ENCODE measurements at regions of chr5 and their contacts with region 1.

Region 1: GRCh38 chr5:154459015-154459414 is 13.2 kb downstream of the SAP30L start:
- DNase-seq: no peak
- H3K4me3 ChIP-seq: no peak overlapping the region
- H3K27ac ChIP-seq: no peak overlapping the region
- H3K4me1 ChIP-seq: no peaks in the 10 kb centered on the region
- H3K27me3 ChIP-seq: no peaks in the 10 kb centered on the region
- CTCF ChIP-seq: no peak

Region 2: GRCh38 chr5:154541553-154541952 is 82.5 kb after region 1 on chr5:
- CTCF ChIA-PET with region 1: no interaction called
- dilution Hi-C with region 1: loop called (anchors 5 kb)
- in situ Hi-C with region 1: no loop called
- intact Hi-C with region 1: no loop called
- DNase-seq: no peak
- H3K4me3 ChIP-seq: no peak overlapping the region
- H3K27ac ChIP-seq: no peak overlapping the region
- H3K4me1 ChIP-seq: no peaks in the 10 kb centered on the region
- H3K27me3 ChIP-seq: peaks cover 5% of the 10 kb centered on the region
- CTCF ChIP-seq: peak; percentile 16 to 53

Region 3: DNA sequence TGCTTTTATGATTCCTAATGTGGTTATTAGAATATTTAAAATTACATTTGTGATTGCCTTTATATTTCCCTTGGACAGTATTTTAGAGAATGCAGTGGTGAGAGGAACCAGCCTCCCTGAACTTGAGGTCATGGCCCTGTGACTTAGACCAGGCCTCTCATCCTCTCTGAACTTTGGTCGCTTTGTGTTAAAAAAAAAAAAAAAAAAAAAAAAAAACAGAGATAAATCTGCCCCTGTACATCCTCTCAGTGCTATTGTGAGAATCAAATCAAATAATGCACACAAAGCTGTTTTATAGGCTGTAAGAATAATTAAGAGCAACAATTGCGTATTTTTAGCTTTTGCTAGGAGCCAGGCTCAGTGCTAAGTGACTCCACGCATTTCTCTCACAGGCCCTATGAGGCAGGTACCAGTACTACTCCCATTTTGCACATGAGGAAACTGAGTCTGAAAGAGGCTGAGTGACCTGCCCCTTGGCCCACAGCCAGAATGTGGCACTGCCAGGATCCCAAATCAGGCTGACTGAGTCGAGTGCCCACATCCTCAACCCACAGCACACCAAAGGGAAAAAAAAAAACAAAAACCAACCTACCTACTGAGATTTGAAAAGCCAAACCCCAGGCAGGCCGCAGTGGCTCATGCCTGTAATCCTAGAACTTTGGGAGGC is 185.9 kb after region 1 on chr5:
- CTCF ChIA-PET with region 1: no interaction called
- dilution Hi-C with region 1: no loop called
- in situ Hi-C with region 1: no loop called
- intact Hi-C with region 1: no loop called
- DNase-seq: no peak
- H3K4me3 ChIP-seq: no peak overlapping the region
- H3K27ac ChIP-seq: no peak overlapping the region
- H3K4me1 ChIP-seq: peaks cover 6% of the 10 kb centered on the region
- H3K27me3 ChIP-seq: peaks cover 2% of the 10 kb centered on the region
- CTCF ChIP-seq: no peak

Region 4: GRCh38 chr5:154714266-154714986 is 255.4 kb after region 1 on chr5:
- CTCF ChIA-PET with region 1: no interaction called
- dilution Hi-C with region 1: loop called (anchors 5 kb)
- in situ Hi-C with region 1: no loop called
- intact Hi-C with region 1: no loop called
- DNase-seq: peak; percentile 4
- H3K4me3 ChIP-seq: no peak overlapping the region
- H3K27ac ChIP-seq: no peak overlapping the region
- H3K4me1 ChIP-seq: peaks cover 19% of the 10 kb centered on the region
- H3K27me3 ChIP-seq: no peaks in the 10 kb centered on the region
- CTCF ChIP-seq: no peak

Measured in mammary epithelial cell (primary cell).